ENCODE measurements at regions of chr15 and their contacts with region 1.

Region 1: DNA sequence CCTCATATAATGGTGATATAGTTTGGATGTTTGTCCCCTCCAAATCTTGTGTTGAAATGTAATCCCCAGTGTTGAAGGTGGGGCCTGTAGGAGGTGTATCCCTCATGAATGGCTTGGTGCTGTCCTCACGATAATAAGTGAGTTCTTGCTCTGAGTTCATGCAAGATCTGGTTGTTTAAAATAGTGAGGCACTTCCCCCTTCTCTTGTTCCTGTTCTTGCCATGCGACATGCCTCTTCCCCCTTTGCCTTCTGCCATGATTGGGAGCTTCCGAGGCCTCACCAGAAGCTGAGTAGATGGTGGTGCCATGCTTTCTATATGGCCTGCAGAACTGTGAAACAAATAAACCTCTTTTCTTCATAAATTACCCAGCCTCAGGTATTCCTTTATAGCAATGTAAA is 39.2 kb downstream of the REC114 start:
- DNase-seq: no peak
- H3K27ac ChIP-seq: no peak overlapping the region
- CTCF ChIP-seq: no peak

Region 2: GRCh38 chr15:73464602-73465001 is 17.6 kb before region 1 on chr15:
- CTCF ChIA-PET with region 1: no interaction called
- POLR2A ChIA-PET with region 1: interaction called, 10 read pairs
- DNase-seq: no peak
- H3K27ac ChIP-seq: no peak overlapping the region
- CTCF ChIP-seq: no peak; the same call in 1 of the 2 replicates

Region 3: GRCh38 chr15:74251131-74251811 is 769.1 kb after region 1 on chr15:
- CTCF ChIA-PET with region 1: no interaction called
- POLR2A ChIA-PET with region 1: no interaction called
- DNase-seq: no peak
- H3K27ac ChIP-seq: no peak overlapping the region
- CTCF ChIP-seq: no peak